Lower lobe of right lung (tissue), 2 donors: ENCODE measurements at regions of chr10 and their contacts with region 1.

Region 1: GRCh38 chr10:73644015-73644743 is 2.9 kb upstream of the MYOZ1 start:
- DNase-seq: no peak
- ATAC-seq: peak; percentile 70 to 71
- H3K4me3 ChIP-seq: no peak overlapping the region
- H3K27ac ChIP-seq: no peak overlapping the region
- H3K4me1 ChIP-seq: peaks cover 27% of the 10 kb centered on the region
- H3K27me3 ChIP-seq: no peaks in the 10 kb centered on the region
- CTCF ChIP-seq: peak; percentile 87

Region 2: DNA sequence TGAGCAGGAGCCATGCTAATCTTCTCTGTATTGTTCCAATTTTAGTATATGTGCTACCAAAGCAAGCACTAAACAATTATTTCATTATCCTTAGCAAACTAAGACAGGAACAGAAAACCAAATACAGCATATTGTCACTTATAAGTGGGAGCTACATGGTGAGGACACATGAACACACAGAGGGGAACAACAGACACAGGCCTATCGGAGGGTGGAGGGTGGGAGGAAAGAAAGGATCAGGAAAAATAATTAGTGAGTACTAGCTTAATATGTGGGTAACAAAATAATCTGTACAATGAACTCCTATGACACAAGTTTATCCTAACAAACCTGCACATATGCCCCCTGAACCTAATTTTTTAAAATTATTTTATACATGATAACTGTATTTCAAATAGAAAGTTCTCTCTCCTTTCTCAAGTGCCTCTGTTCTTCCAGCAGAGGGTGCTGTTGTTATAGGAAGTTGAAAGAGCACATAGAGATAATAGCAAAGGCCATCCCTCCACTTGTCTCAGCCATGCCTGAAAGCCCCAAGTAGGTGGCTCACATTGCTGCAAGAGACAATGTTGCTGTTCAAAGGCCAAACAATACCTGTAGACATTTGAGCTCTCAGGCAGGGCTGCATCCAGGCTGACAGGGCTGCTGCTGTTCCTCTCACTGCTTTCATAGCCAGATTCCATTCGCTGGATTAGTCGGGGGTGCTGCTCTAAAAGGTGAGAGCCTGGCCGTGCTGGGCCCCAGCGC is 114.9 kb before region 1 on chr10:
- intact Hi-C with region 1: loop called (anchors 2 kb)
- DNase-seq: no peak
- ATAC-seq: peak; percentile 69 to 85
- H3K4me3 ChIP-seq: no peak overlapping the region
- H3K27ac ChIP-seq: no peak overlapping the region
- H3K4me1 ChIP-seq: no peaks in the 10 kb centered on the region
- H3K27me3 ChIP-seq: no peaks in the 10 kb centered on the region
- CTCF ChIP-seq: peak; percentile 82